ENCODE measurements at regions of chr5 and their contacts with region 1.

Region 1: GRCh38 chr5:160199410-160199911 is 29.8 kb upstream of the FABP6 start:
- DNase-seq: peak; percentile 43 to 95 (median 71)
- ATAC-seq: peak; percentile 99 to 100 (median 99)
- H3K4me3 ChIP-seq: peak overlapping the region in 2 of 4 donors; percentile 28 to 30
- H3K27ac ChIP-seq: no peak overlapping the region
- H3K4me1 ChIP-seq: no peaks in the 10 kb centered on the region
- H3K27me3 ChIP-seq: no peaks in the 10 kb centered on the region
- CTCF ChIP-seq: peak; percentile 85 to 98 (median 97)

Region 2: GRCh38 chr5:160021831-160022446 is 177.5 kb before region 1 on chr5:
- intact Hi-C with region 1: loop called in 1 of 3 experiments (anchors 10 kb)
- DNase-seq: peak in 3 of 6 donors; percentile 45 to 70 (median 54)
- ATAC-seq: peak; percentile 87 to 99 (median 96)
- H3K4me3 ChIP-seq: no peak overlapping the region
- H3K27ac ChIP-seq: peak overlapping the region in 1 of 4 donors; percentile 53
- H3K4me1 ChIP-seq: peaks cover 0 to 14% (median 11%) of the 10 kb centered on the region in 3 donors
- H3K27me3 ChIP-seq: no peaks in the 10 kb centered on the region
- CTCF ChIP-seq: peak; percentile 47 to 74 (median 60)

Region 3: DNA sequence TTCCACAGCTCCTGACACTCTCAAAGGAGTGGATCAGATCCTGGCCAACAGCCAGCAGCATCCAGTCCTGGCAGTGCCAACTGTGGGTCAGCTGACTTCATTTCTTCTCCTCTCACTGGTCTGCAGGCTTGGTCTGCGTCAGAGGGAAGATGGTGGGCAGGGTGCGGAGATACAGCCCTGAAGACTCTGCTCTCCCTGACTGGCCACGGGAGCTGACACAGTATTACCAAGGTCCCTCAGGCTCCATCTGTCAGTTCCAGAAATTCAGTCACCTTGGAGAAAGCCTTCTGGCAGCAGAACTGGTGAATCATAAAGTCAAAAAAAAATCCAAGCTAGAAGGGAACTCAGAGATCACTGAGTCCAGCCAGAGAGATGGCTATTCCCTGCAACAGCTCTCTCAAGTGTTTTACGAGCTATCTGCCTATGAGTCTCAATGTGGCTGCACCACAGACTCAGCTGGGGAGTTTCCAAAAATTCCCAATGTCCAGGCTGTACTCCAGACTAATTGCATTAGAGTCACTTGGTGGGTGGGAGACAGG is 143.0 kb after region 1 on chr5:
- intact Hi-C with region 1: loop called in 2 of 3 experiments (anchors 5 kb)
- DNase-seq: no peak
- ATAC-seq: no peak
- H3K4me3 ChIP-seq: no peak overlapping the region
- H3K27ac ChIP-seq: no peak overlapping the region
- H3K4me1 ChIP-seq: peaks cover 0 to 7% (median 0%) of the 10 kb centered on the region in 3 donors
- H3K27me3 ChIP-seq: no peaks in the 10 kb centered on the region
- CTCF ChIP-seq: no peak

Region 4: GRCh38 chr5:160357861-160358411 is 158.5 kb after region 1 on chr5:
- intact Hi-C with region 1: loop called in 1 of 3 experiments (anchors 10 kb)
- DNase-seq: no peak
- ATAC-seq: peak in 3 of 4 donors; percentile 25 to 35 (median 29)
- H3K4me3 ChIP-seq: no peak overlapping the region
- H3K27ac ChIP-seq: no peak overlapping the region
- H3K4me1 ChIP-seq: no peaks in the 10 kb centered on the region
- H3K27me3 ChIP-seq: no peaks in the 10 kb centered on the region
- CTCF ChIP-seq: no peak